ENCODE measurements at regions of chr18 and their contacts with region 1.

Region 1: GRCh38 chr18:63180971-63181376 is 138.6 kb downstream of the BCL2 start:
- DNase-seq: no peak
- ATAC-seq: no peak
- H3K4me3 ChIP-seq: no peak overlapping the region
- H3K27ac ChIP-seq: no peak overlapping the region
- H3K4me1 ChIP-seq: peaks cover 47% of the 10 kb centered on the region
- H3K27me3 ChIP-seq: no peaks in the 10 kb centered on the region
- CTCF ChIP-seq: no peak

Region 2: GRCh38 chr18:63164396-63164795 is 16.6 kb before region 1 on chr18:
- intact Hi-C with region 1: loop called in 1 of 2 experiments (anchors 2 kb)
- DNase-seq: no peak
- ATAC-seq: no peak
- H3K4me3 ChIP-seq: no peak overlapping the region
- H3K27ac ChIP-seq: no peak overlapping the region
- H3K4me1 ChIP-seq: peaks cover 28% of the 10 kb centered on the region
- H3K27me3 ChIP-seq: no peaks in the 10 kb centered on the region
- CTCF ChIP-seq: no peak

Region 3: GRCh38 chr18:63255435-63255834 is 74.5 kb after region 1 on chr18:
- intact Hi-C with region 1: loop called in 1 of 2 experiments (anchors 5 kb)
- DNase-seq: no peak
- ATAC-seq: no peak
- H3K4me3 ChIP-seq: no peak overlapping the region
- H3K27ac ChIP-seq: peak overlapping the region; percentile 67
- H3K4me1 ChIP-seq: peaks cover 38% of the 10 kb centered on the region
- H3K27me3 ChIP-seq: no peaks in the 10 kb centered on the region
- CTCF ChIP-seq: no peak

Region 4: DNA sequence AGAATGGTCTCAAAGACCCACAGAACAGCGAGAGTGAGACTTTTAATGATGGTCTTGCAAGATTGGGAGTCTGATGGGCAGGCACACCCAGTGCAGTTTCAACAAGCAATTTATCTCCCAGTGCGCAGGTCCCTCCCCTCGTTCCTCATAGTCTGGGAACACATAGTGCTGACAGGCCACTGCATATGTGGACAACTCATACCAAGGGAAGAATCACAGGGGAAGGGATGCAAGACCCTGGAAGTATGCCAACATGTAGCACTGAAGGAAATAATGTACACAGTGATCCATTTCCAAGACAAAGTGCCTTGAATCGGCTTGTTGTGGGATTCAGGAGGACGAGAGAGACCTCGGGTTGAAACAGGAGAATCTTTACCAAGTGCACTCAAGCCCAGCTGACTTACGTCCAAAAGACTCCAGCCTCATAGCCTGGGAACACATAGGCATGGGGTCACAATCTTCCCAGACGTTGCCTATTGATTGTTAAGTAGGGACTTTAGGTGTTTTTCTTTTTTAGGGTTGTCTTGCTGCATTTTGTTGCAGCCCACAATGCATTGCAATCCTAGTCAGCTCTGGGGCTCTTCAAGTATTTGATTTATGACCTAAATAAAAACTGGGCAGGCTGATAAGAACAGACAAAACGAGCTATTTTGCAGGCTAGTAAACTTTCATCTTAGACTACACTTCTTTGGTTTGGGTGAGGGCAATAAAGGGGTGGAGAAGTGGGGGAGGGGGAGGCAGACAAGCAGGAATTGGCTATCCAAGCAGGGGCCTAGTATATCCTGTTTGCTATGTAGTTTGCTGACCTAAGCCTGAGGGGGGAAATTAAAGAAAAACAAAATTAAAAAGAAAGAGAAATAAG is 271.1 kb after region 1 on chr18:
- intact Hi-C with region 1: no loop called
- DNase-seq: no peak
- ATAC-seq: no peak
- H3K4me3 ChIP-seq: no peak overlapping the region
- H3K27ac ChIP-seq: no peak overlapping the region
- H3K4me1 ChIP-seq: no peaks in the 10 kb centered on the region
- H3K27me3 ChIP-seq: no peaks in the 10 kb centered on the region
- CTCF ChIP-seq: no peak